Dendritic cell treated with granulocyte-macrophage colony-stimulating factor and Interleukin-4, amounts not matched to agents 40 ng/mL and 50 ng/mL, for 4 days (primary cell): ENCODE measurements at regions of chr13 and their contacts with region 1.

Region 1: GRCh38 chr13:28574617-28575142 is 79.8 kb upstream of the FLT1 start:
- H3K4me3 Mint-ChIP-seq: no peak overlapping the region
- H3K27ac Mint-ChIP-seq: peak overlapping the region; percentile 69
- H3K4me1 Mint-ChIP-seq: peaks cover 36% of the 10 kb centered on the region
- H3K27me3 Mint-ChIP-seq: peaks cover 28% of the 10 kb centered on the region

Region 2: DNA sequence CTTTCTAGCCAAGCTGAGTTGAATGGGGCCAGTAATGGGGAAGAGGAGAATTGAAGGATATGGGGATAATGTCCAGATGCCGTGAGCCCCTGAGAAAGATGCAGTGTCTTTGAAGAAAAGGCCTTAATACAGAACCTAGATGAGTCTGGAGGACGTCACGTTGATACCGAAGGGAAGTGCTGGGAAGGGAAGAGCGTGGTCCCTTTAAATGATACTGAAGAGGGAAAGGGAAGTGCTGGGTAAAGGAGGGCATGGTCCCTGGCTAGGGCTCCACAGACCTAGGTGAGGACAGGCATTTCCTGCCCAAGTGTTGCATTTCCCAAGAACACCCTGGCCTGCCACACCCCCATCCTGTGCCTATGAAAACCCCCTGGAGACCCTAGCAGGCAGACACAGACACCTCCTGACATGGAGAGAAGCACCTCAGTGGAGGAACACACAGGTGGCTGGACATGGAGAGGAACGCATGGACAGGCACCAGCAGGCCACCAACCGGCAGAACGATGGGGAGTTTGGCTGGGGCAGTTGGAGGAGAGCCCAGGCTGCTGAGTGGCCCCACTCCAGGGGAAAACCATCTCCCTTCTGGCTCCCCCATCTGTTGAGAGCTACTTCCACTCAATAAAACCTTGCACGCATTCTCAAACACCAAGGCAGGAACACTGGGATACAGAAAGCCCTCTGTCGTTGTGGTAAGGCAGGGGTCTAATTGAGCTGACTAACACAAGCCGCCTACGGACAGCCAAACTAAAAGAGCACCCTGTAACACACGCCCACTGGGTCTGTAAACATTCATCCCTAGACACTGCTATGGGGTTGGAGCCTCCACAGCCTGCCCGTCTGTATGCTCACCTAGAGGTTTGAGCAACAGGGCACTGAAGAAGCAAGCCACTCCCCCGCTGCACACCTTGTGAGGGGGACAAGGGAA is 49.4 kb after region 1 on chr13:
- intact Hi-C with region 1: loop called (anchors 10 kb)
- H3K4me3 Mint-ChIP-seq: no peak overlapping the region
- H3K27ac Mint-ChIP-seq: peak overlapping the region; percentile 86
- H3K4me1 Mint-ChIP-seq: peaks cover 83% of the 10 kb centered on the region
- H3K27me3 Mint-ChIP-seq: no peaks in the 10 kb centered on the region